ENCODE measurements at regions of chr6 and their contacts with region 1.

Region 1: DNA sequence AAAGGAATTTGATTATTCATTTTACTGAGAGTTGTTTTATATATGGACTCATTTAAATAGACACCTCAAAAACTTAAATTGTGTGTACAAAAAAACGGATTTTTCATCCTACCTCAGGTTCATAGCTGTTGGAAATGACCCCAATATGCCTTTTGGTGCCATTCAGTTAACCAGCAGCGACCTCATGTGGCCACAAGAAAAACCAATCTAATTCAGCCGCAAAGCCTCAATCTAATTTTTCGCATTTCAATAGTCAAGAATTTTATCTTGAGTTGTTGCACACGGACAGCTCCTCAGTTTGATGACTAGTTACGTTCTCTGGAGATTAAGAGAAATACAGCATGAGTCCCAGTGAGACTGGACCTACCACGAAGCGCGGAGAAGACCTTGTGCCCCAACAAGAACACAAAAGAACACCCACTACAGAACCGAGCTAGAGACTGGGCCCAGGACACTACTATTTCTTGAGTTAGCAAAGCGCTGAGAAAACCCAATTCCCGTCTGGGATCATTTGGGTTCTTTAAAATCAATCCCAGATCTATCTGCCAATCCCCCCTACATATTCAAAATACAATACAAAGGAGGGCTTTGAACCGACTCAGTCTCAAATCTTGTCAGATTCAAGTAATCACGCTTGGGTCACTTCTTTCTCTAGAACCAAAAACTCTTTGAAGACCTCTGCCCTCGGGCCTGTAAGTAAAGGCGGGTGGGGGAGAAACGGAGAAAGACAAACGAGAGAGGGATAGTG is 1.1 kb downstream of the TCP11 start:
- DNase-seq: peak; percentile 53 to 71 (median 66)
- H3K4me3 ChIP-seq: no peak overlapping the region
- H3K27ac ChIP-seq: peak overlapping the region in 1 of 2 donors; percentile 51
- H3K4me1 ChIP-seq: peaks cover 2% of the 10 kb centered on the region
- H3K27me3 ChIP-seq: no peaks in the 10 kb centered on the region
- CTCF ChIP-seq: peak; percentile 82 to 89 (median 84)
- EP300 ChIP-seq: no peak
- POLR2A ChIP-seq: no peak

Region 2: DNA sequence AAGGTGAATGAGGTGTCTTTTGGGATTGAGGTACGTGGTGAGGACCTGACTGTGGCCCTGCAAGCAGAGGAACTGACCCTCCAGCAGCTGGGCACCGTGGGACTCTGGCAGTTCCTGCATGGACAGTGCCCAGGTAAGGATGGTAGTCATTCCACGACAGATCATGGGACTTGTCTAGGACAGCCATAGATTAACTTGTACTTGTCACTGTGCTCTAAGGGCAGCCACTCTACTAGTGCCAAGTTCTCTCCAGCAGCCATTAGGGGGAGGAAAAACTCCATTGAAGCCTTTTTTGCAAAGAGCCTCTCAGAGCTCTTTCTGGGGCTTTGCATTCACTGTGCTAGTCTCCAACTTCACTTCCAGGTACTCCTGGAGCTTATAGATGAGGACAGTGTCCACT is 272.6 kb before region 1 on chr6:
- intact Hi-C with region 1: loop called in 1 of 4 experiments (anchors 10 kb)
- DNase-seq: no peak
- H3K4me3 ChIP-seq: no peak overlapping the region
- H3K27ac ChIP-seq: no peak overlapping the region
- H3K4me1 ChIP-seq: no peaks in the 10 kb centered on the region
- H3K27me3 ChIP-seq: no peaks in the 10 kb centered on the region
- CTCF ChIP-seq: no peak
- EP300 ChIP-seq: no peak
- POLR2A ChIP-seq: no peak

Region 3: GRCh38 chr6:35202066-35202546 is 62.0 kb after region 1 on chr6:
- intact Hi-C with region 1: loop called in 1 of 4 experiments (anchors 10 kb)
- DNase-seq: no peak
- H3K4me3 ChIP-seq: no peak overlapping the region
- H3K27ac ChIP-seq: no peak overlapping the region
- H3K4me1 ChIP-seq: no peaks in the 10 kb centered on the region
- H3K27me3 ChIP-seq: no peaks in the 10 kb centered on the region
- CTCF ChIP-seq: no peak
- EP300 ChIP-seq: no peak
- POLR2A ChIP-seq: no peak